Right ventricle myocardium superior (tissue), 1 donor: ENCODE measurements at regions of chr2 and their contacts with region 1.

Region 1: GRCh38 chr2:225889446-225889850 is 489.9 kb downstream of the NYAP2 start:
- DNase-seq: no peak
- ATAC-seq: peak; percentile 60

Region 2: GRCh38 chr2:225937713-225938112 is 48.3 kb after region 1 on chr2:
- intact Hi-C with region 1: no loop called
- DNase-seq: no peak
- ATAC-seq: no peak

Region 3: DNA sequence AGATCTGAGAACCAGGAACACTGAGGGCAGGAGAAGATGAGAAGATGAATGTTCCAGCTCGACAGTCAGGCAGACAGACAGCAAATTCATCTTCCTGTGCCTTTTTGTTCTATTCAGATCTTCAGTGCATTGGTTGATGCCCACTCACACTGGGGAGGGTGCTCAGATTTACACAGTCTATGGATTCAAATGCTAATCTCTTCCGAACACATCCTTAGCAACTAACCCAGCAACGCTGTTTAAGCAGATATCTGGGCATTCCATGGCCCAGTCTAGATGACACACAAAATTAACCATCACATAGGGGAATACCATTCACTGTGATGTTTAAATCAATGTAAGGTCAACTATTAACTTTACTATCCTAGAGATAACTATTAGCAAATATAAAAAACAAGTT is 82.0 kb after region 1 on chr2:
- intact Hi-C with region 1: no loop called
- DNase-seq: no peak
- ATAC-seq: no peak

Region 4: DNA sequence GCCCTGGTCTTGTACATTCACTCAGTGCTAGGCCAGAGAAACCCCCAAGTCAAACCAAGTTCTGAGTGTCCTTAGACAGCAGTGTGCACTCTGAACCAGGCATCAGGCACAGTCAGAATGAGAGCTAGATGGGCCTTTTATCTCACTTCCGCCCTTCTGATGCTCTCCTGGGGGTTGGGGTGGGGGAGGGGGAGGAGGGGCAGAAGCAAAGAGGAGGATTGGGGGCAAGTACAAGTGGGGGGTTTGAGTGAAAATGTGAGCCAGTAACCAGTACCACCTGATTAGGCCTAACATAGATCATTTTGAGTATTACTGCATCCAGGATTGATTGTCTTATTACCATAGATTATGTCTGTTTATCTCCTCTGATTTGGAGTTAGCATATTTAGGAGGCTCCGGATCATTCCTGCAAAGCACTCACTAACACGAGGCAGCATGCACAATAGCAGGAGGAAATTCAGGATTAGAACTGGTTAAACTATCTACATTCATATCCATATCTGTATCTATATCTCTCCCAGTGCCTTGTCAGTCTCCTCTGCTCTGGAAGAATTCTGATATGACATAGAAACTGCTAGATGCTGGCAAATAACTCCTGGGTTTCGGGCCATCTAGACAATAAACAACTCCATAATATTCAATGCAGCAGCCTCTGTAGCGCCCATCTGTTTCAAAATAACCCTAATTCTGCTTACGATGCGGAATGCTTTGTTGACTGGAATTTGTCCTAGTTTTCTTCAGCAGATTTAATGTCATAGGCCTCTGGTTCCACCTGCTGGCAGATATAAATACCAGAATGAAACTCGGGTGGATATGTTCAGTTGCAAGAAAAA is 1095.5 kb after region 1 on chr2:
- intact Hi-C with region 1: loop called (anchors 10 kb)
- DNase-seq: no peak
- ATAC-seq: peak; percentile 74